Left colon (tissue), 2 donors: ENCODE measurements at regions of chr3 and their contacts with region 1.

Region 1: DNA sequence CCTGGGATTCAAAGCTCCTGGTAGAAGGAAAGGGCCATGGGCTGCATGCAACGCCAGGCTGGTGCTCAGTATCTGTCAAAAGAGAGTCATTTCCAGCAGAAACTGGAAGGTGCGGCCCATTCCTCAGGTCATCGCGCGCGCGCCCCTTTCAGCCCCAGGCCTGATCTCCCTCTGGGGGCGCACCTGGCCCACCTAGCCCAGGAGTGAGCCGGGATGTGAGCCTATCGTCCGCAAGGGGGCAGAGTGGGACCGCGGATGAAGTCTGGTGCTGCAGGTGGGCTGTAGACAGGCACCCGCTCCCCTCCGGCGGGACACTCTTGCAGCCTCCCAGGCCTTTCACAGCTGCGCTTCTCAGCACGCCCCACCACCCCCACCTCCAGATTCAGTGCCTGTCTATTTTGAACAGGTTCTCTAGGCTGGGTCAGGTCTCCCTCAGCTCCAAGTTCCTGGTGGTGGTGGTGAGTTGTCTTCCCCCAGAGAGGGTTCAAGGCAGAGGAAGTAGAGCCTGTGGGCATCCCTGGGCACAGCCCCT is 5.8 kb upstream of the RPL29 start:
- DNase-seq: peak in 1 of 2 donors; percentile 84
- ATAC-seq: peak; percentile 81

Region 2: DNA sequence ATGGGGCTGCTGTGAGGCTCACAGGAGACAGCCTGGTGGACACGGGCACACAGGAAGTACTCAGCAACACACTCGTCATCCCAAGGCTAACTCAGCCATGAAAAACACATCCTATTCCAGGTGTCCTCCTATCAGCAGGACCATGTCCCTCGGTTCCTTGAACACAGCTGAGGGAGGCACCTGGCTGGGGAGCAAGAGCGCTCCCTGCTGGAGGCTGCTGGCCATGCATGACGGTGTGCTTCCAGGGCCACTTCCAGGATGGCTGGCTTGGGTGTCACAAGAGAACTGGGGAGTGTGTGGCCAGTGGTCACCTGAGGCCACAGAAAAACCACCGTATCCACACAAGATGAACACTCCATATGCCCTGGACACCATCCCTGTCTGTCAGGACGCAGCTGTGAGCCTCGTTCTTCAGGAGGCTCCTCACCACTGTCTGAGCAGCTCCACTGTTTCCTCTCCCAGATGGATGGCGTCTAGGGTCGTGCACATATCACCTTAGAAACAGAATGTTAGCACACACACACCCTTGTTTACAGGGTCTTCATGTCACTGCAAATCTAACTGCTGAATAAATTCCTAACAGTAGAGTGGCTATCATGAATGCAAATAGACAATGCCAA is 121.7 kb after region 1 on chr3:
- intact Hi-C with region 1: loop called (anchors 5 kb)
- DNase-seq: peak; percentile 47 to 78
- ATAC-seq: peak; percentile 97

Region 3: DNA sequence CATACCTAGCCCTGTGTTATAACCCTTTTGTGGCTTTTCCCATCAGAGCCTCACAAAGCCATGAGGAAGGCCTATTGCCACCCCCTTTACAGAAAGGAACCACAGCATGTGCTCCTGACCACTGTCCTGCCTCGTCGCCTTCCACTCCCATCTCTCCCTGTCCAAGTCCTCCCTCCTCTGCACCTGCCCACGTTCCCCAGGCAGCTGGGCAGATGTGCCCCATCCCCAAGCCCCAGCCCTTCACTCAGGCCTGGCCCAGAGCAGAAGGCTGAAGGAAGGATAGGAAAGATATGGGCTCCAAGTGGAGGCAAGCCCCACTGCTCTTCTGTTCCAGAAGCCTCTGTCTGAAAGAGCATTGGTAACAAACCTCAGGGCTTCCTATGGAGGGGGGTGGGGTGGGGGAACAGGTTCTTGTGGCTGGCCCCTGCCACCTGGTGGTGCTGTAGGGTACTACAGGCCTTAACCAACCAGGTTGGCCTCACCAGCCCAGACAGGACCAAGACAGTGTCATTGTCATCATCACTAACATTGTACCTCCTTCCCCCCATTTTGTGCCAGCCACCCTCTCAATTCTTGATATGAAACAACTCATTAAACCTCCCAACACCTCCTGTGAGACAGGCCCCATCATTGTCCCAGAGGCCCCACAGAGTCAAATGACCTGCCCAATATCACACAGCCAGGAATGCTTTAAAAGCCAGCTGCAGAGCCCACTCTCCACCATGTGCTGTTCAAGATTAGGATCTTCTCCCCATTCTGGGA is 142.7 kb after region 1 on chr3:
- intact Hi-C with region 1: loop called in 1 of 2 experiments (anchors 5 kb)
- DNase-seq: peak; percentile 79 to 91
- ATAC-seq: peak; percentile 93